OCI-LY7 (cell line): ENCODE measurements at regions of chrX and their contacts with region 1.

Region 1: GRCh38 chrX:151151665-151152267 is 24.6 kb upstream of the GPR50 start:
- DNase-seq: peak; percentile 52
- H3K4me3 ChIP-seq: no peak overlapping the region
- H3K27ac ChIP-seq: no peak overlapping the region
- H3K4me1 ChIP-seq: no peaks in the 10 kb centered on the region
- CTCF ChIP-seq: peak; percentile 81

Region 2: GRCh38 chrX:150366951-150367545 is 784.7 kb before region 1 on chrX:
- CTCF ChIA-PET with region 1: no interaction called
- POLR2A ChIA-PET with region 1: no interaction called
- intact Hi-C with region 1: no loop called
- DNase-seq: no peak
- H3K4me3 ChIP-seq: no peak overlapping the region
- H3K27ac ChIP-seq: no peak overlapping the region
- H3K4me1 ChIP-seq: no peaks in the 10 kb centered on the region
- CTCF ChIP-seq: no peak

Region 3: GRCh38 chrX:151680805-151681204 is 529.0 kb after region 1 on chrX:
- CTCF ChIA-PET with region 1: no interaction called
- POLR2A ChIA-PET with region 1: no interaction called
- intact Hi-C with region 1: loop called (anchors 1 kb)
- DNase-seq: peak; percentile 44
- H3K4me3 ChIP-seq: no peak overlapping the region
- H3K27ac ChIP-seq: no peak overlapping the region
- H3K4me1 ChIP-seq: no peaks in the 10 kb centered on the region
- CTCF ChIP-seq: peak; percentile 71